Right cardiac atrium (tissue), 5 donors: ENCODE measurements at regions of chr11 and their contacts with region 1.

Region 1: GRCh38 chr11:75450826-75451821 is 18.1 kb upstream of the KLHL35 start:
- DNase-seq: peak in 2 of 3 donors; percentile 56
- ATAC-seq: no peak
- H3K4me3 ChIP-seq: no peak overlapping the region
- H3K27ac ChIP-seq: no peak overlapping the region
- H3K4me1 ChIP-seq: no peaks in the 10 kb centered on the region
- H3K27me3 ChIP-seq: no peaks in the 10 kb centered on the region

Region 2: DNA sequence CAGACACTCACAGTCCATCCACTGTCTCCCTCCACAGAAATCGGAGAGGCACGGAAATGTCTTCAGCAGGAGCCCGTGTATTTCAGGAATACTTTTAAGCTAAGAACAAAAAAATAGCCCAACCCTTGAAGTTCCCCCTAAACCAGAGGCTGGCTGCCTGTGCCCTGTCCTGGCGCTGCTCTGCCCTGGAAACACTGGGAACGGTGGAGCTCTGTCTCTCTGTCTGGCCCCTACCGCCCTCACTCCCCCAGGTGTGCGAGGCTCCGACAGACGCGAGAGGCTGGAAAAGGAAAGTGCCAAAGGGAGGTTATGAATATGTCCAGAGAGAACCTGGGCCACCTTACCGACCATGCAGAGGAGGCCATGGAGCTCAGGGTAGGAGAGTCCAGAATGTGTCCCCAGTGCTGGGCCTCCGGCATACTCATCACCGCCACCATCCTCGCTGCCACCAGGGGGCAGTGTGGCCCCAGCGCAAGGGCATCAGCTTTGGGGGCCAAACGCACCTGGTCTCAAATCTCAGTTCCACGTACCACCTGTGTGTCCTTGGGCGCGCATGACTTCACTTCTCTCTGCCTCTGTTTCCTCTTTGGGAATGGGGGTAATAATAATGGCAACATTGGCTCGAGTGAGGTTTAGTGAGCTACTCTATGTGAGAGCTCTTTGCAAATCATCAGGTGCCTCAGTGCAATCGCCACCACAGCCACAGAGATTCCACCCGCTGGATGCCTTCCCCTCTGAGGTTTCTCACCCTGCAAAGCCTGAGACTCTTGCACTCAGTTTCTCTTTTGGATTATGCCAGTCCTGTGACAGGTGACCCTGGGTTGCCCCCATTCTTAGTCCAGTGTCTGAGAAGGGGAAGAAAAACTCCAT is 310.6 kb before region 1 on chr11:
- intact Hi-C with region 1: no loop called
- DNase-seq: peak; percentile 63 to 90 (median 88)
- ATAC-seq: peak; percentile 47 to 61
- H3K4me3 ChIP-seq: no peak overlapping the region
- H3K27ac ChIP-seq: no peak overlapping the region
- H3K4me1 ChIP-seq: no peaks in the 10 kb centered on the region
- H3K27me3 ChIP-seq: no peaks in the 10 kb centered on the region

Region 3: DNA sequence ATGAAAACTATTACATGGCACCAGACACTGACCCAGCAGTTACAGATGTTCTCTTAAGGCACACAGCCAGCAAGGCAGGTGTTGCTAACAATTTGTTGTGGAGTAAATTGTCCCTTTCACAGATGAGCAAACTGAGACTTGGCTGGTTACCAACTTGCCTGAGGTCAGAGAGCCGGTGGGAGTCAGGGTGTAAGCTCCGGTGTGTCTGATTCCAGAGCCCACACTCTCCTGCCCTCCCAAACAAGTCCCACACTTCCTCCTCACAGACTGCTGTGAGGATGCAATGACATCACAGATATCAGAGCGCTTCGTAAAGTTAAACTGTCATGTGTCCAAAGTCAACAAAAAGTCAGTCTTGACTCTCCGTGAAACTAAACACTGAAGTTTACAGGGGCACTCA is 62.1 kb after region 1 on chr11:
- intact Hi-C with region 1: loop called in 1 of 4 experiments (anchors 10 kb)
- DNase-seq: no peak
- ATAC-seq: peak; percentile 20 to 62
- H3K4me3 ChIP-seq: no peak overlapping the region
- H3K27ac ChIP-seq: no peak overlapping the region
- H3K4me1 ChIP-seq: no peaks in the 10 kb centered on the region
- H3K27me3 ChIP-seq: no peaks in the 10 kb centered on the region